Activated naive CD4-positive, alpha-beta T cell treated with anti-CD3 and anti-CD28 coated beads for 36 hours (primary cell): ENCODE measurements at regions of chr1 and their contacts with region 1.

Region 1: GRCh38 chr1:153352523-153352922 is 3.9 kb upstream of the PGLYRP4 start:
- DNase-seq: peak; percentile 83
- H3K4me3 Mint-ChIP-seq: no peak overlapping the region
- H3K27ac Mint-ChIP-seq: no peak overlapping the region
- H3K4me1 Mint-ChIP-seq: peaks cover 11% of the 10 kb centered on the region
- H3K27me3 Mint-ChIP-seq: peaks cover 5% of the 10 kb centered on the region

Region 2: DNA sequence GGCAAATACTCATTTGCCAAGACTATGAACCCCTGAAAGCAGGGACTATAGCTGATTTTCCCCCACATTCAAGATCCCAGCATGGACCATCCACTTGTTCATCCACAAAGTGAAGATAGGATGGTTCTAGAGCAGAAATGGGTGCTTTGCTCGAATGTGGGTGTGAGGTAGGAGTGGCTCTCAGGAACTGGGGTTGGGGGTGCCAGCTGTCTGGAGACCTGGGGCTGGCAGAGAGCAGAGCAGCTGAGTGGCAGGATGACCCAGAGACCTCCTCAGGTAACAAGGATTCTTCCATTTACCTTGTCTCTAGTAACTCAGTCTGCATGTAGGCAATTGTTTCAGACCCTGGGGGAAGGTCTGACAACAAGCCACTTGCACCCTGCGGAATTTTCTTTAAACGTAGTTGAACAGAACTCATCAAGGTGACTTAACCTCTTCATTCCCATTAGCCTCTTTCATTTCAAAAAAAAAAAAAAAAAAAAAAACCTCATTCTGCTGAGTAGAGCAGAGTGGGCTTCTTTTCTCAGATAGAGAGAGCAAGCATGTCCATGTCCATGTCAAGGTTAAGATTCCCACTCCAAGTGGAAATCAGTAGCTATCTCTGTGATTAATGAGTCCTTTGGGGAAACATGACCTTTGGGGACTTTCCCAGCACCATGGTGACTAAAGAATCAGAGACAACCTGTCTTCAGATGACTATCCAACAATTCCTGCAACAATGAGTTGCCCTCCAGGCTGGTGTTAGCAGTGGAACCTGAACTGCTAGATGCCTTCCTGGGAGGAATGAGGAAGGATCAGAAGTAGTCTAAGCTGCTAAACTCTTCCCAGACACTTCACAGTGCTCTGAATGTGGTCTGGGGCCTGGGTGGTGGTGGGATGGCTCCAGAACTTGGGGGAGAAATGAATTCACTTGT is 11.4 kb after region 1 on chr1:
- CTCF ChIA-PET with region 1: interaction called, 16 read pairs
- intact Hi-C with region 1: no loop called
- DNase-seq: no peak
- H3K4me3 Mint-ChIP-seq: no peak overlapping the region
- H3K27ac Mint-ChIP-seq: no peak overlapping the region
- H3K4me1 Mint-ChIP-seq: peaks cover 1% of the 10 kb centered on the region
- H3K27me3 Mint-ChIP-seq: no peaks in the 10 kb centered on the region

Region 3: DNA sequence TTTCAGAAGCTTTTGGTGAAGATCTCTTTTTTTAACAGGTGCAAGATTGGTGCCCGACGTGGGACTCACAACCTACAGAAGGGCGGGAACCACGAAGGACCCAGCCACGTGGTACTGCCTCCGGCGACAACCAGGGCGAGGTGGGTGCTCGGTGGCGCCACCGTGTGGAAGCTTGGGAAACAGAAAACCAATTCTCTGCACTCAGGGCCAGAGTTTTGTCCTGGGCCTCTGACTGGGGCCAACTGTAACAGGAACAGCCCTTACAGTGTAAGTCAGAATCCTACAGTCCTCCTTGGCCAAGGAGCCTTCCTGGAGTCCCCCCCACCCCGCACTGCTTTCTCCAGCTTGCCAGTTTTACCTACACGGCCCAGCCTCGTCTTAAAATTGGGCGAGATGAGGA is 52.2 kb after region 1 on chr1:
- CTCF ChIA-PET with region 1: interaction called, 25 read pairs
- intact Hi-C with region 1: loop called (anchors 1 kb)
- DNase-seq: peak; percentile 75
- H3K4me3 Mint-ChIP-seq: no peak overlapping the region
- H3K27ac Mint-ChIP-seq: no peak overlapping the region
- H3K4me1 Mint-ChIP-seq: peaks cover 13% of the 10 kb centered on the region
- H3K27me3 Mint-ChIP-seq: peaks cover 9% of the 10 kb centered on the region

Region 4: GRCh38 chr1:153775458-153776327 is 423.2 kb after region 1 on chr1:
- CTCF ChIA-PET with region 1: no interaction called
- intact Hi-C with region 1: loop called (anchors 10 kb)
- DNase-seq: peak; percentile 60
- H3K4me3 Mint-ChIP-seq: peak overlapping the region; percentile 69
- H3K27ac Mint-ChIP-seq: no peak overlapping the region
- H3K4me1 Mint-ChIP-seq: peaks cover 9% of the 10 kb centered on the region
- H3K27me3 Mint-ChIP-seq: no peaks in the 10 kb centered on the region